Prostate gland (tissue), 2 donors: ENCODE measurements at regions of chr17 and their contacts with region 1.

Region 1: DNA sequence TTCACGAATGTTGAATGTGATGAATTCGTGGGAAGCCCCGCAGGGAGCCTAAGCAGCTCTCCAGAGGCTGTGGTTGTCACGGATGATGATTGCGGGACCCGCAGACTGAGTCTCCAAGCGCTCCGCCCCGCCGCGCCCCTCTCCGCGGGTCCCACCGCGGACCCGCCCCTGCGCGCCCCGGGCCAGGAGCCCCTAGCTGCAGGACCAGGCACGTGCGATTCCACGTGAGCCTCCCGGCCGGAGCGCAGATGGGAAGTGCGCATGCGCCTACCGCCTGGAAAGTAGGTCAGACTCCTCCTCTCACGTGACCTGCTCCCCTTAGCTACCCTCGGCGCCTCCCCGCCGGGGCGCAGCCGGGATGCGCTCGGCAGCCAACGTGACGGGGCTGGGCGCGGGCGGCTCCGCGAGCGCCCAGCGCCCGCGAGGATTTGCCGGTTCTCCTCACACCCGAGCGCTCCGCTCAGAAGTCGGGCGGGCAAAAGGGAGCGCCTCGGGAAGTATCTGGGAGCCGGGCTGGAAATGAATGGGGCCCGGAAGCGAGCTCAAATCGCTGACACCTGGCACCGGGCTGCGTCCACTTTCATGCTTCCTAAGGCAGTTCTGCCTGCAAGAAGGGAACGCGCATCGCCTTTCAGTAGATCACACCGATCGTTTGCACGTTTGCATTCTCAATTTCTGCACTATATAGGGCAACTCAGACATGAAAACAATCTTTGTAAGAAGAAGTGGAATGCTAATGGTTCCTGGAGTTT is 26.4 kb upstream of the HLF start:
- DNase-seq: peak; percentile 94
- H3K4me3 ChIP-seq: peak overlapping the region; percentile 33
- H3K27ac ChIP-seq: peak overlapping the region; percentile 61 to 79
- H3K4me1 ChIP-seq: no peaks in the 10 kb centered on the region
- H3K27me3 ChIP-seq: no peaks in the 10 kb centered on the region
- CTCF ChIP-seq: peak in 2 of 4 experiments; percentile 30 to 33
- POLR2A ChIP-seq: peak; percentile 28

Region 2: GRCh38 chr17:55152236-55152635 is 86.1 kb before region 1 on chr17:
- intact Hi-C with region 1: no loop called
- DNase-seq: no peak
- H3K4me3 ChIP-seq: no peak overlapping the region
- H3K27ac ChIP-seq: no peak overlapping the region
- H3K4me1 ChIP-seq: no peaks in the 10 kb centered on the region
- H3K27me3 ChIP-seq: no peaks in the 10 kb centered on the region
- CTCF ChIP-seq: no peak
- POLR2A ChIP-seq: no peak

Region 3: DNA sequence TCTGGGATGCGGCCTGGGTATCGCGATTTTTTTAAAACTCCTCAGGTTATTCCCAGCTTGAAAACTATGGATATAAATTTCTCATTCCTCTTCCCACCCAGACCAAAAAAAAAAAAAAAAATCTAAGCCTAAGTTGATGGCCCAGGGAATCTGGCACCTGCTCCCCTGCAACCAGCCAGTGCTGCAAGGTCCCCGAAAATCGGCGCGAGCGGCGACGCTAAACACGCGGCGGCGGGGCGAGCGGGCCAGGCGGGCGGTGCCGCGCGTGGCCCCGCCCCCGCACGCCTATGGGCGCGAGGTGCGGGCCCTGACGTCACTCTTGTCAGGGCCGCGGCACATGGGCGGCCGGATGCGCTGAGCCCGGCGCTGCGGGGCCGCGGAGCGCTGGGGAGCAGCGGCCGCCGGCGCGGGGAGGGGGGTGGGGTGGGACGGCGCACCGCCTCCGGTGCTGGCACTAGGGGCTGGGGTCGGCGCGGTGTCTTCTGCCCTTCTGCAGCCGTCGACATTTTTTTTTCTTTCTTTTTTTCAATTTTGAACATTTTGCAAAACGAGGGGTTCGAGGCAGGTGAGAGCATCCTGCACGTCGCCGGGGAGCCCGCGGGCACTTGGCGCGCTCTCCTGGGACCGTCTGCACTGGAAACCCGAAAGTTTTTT is 26.4 kb after region 1 on chr17 and contains the start of gene HLF:
- intact Hi-C with region 1: loop called (anchors 1 kb)
- DNase-seq: peak; percentile 69
- H3K4me3 ChIP-seq: peak within 1 kb of the TSS; percentile 39 to 45
- H3K27ac ChIP-seq: peak within 1 kb of the TSS; percentile 78 to 80
- H3K4me1 ChIP-seq: no peaks in the 10 kb centered on the region
- H3K27me3 ChIP-seq: no peaks in the 10 kb centered on the region
- CTCF ChIP-seq: no peak
- POLR2A ChIP-seq: peak; percentile 29
- total RNA-seq, gene HLF: 26.5 to 34.9 TPM